Lower leg skin (tissue), 4 donors: ENCODE measurements at regions of chr7 and their contacts with region 1.

Region 1: DNA sequence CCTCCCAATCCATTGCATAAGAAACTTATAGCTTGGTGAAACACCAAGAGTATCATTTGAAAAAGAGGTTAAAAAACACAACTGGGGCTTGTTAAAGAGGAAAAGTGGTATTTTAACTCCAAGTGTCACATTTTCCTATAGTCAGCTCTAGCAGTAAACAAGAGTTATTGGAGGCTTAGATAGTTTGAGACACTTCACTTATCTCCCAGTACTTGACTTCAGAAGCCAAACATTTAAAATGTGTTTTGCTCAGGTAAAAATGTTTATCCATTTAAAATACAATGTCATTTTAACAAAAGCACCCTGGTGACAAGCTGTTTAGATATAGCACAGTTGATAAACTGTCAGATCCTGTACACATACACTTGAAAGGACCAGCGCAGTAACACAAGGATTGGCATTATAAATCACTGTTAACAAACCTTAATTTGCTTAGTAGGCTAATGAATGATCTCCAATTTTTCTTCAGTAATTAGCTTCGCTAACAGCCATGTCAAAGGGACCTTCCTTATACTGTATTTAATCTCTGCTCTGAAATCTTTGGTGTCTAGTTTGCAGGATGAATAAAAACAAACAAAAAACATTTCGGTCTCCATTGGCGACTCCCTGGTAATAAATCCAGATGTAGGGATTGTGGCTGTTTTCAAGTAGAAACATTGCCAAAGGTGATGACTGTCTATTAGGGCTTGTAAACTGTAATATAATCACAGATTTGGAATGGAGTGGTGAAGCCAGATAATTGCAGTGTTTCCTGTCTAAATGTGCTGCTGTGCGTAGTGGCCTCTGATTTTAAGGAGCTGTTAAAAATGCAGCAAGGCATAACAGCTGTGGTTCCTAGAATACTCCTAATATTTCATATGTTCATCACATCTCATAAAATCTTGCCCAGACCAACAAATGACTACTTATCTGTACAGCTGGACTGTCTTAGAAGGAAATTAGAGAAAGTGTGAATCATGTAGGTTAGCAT is 545.1 kb downstream of the AUTS2 start:
- DNase-seq: no peak
- H3K4me3 ChIP-seq: no peak overlapping the region
- CTCF ChIP-seq: no peak
- POLR2A ChIP-seq: no peak

Region 2: GRCh38 chr7:70177166-70177565 is 33.8 kb after region 1 on chr7:
- intact Hi-C with region 1: loop called (anchors 2 kb)
- DNase-seq: no peak
- H3K4me3 ChIP-seq: no peak overlapping the region
- CTCF ChIP-seq: no peak
- POLR2A ChIP-seq: no peak